ENCODE measurements at regions of chr6 and their contacts with region 1.

Region 1: GRCh38 chr6:161418463-161418945 is 144.6 kb upstream of the AGPAT4 start:
- DNase-seq: peak in 1 of 2 donors; percentile 78
- ATAC-seq: peak in 7 of 8 donors; percentile 34 to 81 (median 70)
- H3K4me3 ChIP-seq: no peak overlapping the region
- H3K27ac ChIP-seq: peak overlapping the region in 5 of 10 donors; percentile 11 to 70 (median 46)
- H3K4me1 ChIP-seq: peaks cover 0 to 31% (median 5%) of the 10 kb centered on the region in 9 donors
- H3K27me3 ChIP-seq: no peaks in the 10 kb centered on the region
- CTCF ChIP-seq: peak; percentile 58 to 85 (median 74)

Region 2: GRCh38 chr6:161498359-161498758 is 79.9 kb after region 1 on chr6:
- intact Hi-C with region 1: loop called in 5 of 10 experiments (anchors 5 to 10 kb)
- DNase-seq: peak in 1 of 2 donors; percentile 18
- ATAC-seq: peak; percentile 11 to 81 (median 76)
- H3K4me3 ChIP-seq: no peak overlapping the region
- H3K27ac ChIP-seq: no peak overlapping the region
- H3K4me1 ChIP-seq: no peaks in the 10 kb centered on the region
- H3K27me3 ChIP-seq: no peaks in the 10 kb centered on the region
- CTCF ChIP-seq: peak in 8 of 9 donors; percentile 16 to 57 (median 44)

Region 3: DNA sequence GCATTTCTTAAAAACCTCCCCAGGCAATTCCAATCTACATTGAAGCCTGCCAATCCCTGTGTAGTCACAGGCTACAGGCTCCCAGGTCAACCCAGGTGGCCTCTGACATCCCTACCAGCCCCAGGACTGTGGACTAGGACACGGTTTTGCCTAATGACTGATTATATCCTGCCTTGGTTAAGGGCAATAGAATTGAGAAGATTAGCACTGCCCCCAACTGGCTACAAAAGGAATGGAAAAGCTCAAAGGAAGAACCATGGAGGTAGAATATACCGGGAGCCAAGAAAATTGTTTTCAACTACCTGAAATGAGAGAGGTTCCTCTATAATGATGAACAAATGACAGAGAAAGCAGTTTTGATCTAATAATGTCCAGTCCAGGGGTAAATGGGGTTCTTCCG is 276.5 kb after region 1 on chr6:
- intact Hi-C with region 1: loop called in 5 of 10 experiments (anchors 2 to 10 kb)
- DNase-seq: no peak
- ATAC-seq: peak in 2 of 8 donors; percentile 24 to 41
- H3K4me3 ChIP-seq: no peak overlapping the region
- H3K27ac ChIP-seq: no peak overlapping the region
- H3K4me1 ChIP-seq: no peaks in the 10 kb centered on the region
- H3K27me3 ChIP-seq: no peaks in the 10 kb centered on the region
- CTCF ChIP-seq: peak in 8 of 9 donors; percentile 12 to 61 (median 54)

Region 4: GRCh38 chr6:161804838-161805237 is 386.3 kb after region 1 on chr6:
- intact Hi-C with region 1: loop called in 1 of 10 experiments (anchors 10 kb)
- DNase-seq: no peak
- ATAC-seq: peak in 1 of 8 donors; percentile 46
- H3K4me3 ChIP-seq: no peak overlapping the region
- H3K27ac ChIP-seq: no peak overlapping the region
- H3K4me1 ChIP-seq: peaks cover 0 to 10% (median 0%) of the 10 kb centered on the region in 9 donors
- H3K27me3 ChIP-seq: no peaks in the 10 kb centered on the region
- CTCF ChIP-seq: no peak

Measured in heart right ventricle (tissue), 16 donors.